Endothelial cell of umbilical vein (primary cell): ENCODE measurements at regions of chr13 and their contacts with region 1.

Region 1: DNA sequence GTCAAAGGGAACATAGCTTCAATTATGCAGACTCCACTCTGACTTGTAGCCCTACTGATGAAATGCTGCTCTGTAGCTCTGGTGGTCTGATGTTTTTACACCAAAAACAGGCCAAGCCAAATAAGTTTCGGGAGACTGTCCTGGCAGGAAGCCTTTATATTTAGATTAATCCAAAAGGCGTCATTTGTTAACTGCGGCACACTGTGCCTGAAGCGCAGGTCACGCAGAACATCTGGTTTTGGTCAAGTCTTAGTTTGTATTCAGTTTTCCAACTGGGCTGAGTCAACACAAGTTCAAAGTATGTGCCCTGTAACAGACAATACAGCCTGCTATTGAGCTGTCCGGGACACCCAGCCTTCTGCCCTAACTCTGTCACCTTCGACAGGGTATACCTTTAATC is 154.6 kb upstream of the IPO5 start:
- DNase-seq: no peak
- H3K4me3 ChIP-seq: no peak overlapping the region
- H3K27ac ChIP-seq: no peak overlapping the region
- H3K4me1 ChIP-seq: no peaks in the 10 kb centered on the region
- H3K27me3 ChIP-seq: peaks cover 0 to 3% of the 10 kb centered on the region in 2 experiments
- CTCF ChIP-seq: no peak
- POLR2A ChIP-seq: no peak

Region 2: DNA sequence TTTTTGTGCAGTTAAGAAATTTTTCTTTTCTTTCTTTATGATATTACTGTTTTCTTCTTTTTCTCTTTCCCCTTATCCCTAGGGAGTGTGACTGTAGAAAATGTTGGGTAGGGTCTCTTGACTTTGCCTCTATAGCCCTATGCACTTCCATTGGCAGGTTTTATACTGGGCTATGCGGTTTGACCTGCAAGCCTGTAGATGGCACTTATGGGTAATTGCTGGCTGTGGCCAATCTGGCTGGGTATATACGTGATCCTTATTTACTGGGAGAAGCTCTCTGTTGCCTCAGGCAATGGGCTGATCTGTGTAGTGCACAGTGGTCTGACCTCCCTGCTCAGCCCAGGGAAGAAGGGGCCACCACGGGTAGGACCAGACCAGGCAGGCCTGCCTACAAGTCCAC is 286.1 kb before region 1 on chr13:
- CTCF ChIA-PET with region 1: no interaction called
- POLR2A ChIA-PET with region 1: no interaction called
- dilution Hi-C with region 1: no loop called
- intact Hi-C with region 1: loop called (anchors 5 kb)
- DNase-seq: no peak
- H3K4me3 ChIP-seq: no peak overlapping the region
- H3K27ac ChIP-seq: no peak overlapping the region
- H3K4me1 ChIP-seq: no peaks in the 10 kb centered on the region
- H3K27me3 ChIP-seq: peaks cover 0 to 4% of the 10 kb centered on the region in 2 experiments
- CTCF ChIP-seq: no peak
- POLR2A ChIP-seq: no peak

Region 3: GRCh38 chr13:97588993-97589392 is 209.8 kb before region 1 on chr13:
- CTCF ChIA-PET with region 1: interaction called, 5 read pairs
- POLR2A ChIA-PET with region 1: no interaction called
- dilution Hi-C with region 1: no loop called
- intact Hi-C with region 1: loop called (anchors 1 kb)
- DNase-seq: no peak
- H3K4me3 ChIP-seq: no peak overlapping the region
- H3K27ac ChIP-seq: no peak overlapping the region
- H3K4me1 ChIP-seq: no peaks in the 10 kb centered on the region
- H3K27me3 ChIP-seq: peaks cover 4 to 6% of the 10 kb centered on the region in 2 experiments
- CTCF ChIP-seq: peak in 1 of 2 donors; percentile 8
- POLR2A ChIP-seq: no peak

Region 4: GRCh38 chr13:97659602-97660001 is 139.2 kb before region 1 on chr13:
- CTCF ChIA-PET with region 1: interaction called, 4 read pairs
- POLR2A ChIA-PET with region 1: no interaction called
- dilution Hi-C with region 1: no loop called
- intact Hi-C with region 1: loop called (anchors 1 kb)
- DNase-seq: peak; percentile 45
- H3K4me3 ChIP-seq: no peak overlapping the region
- H3K27ac ChIP-seq: no peak overlapping the region
- H3K4me1 ChIP-seq: peaks cover 54% of the 10 kb centered on the region
- H3K27me3 ChIP-seq: no peaks in the 10 kb centered on the region
- CTCF ChIP-seq: peak; percentile 30 to 41
- POLR2A ChIP-seq: no peak

Region 5: DNA sequence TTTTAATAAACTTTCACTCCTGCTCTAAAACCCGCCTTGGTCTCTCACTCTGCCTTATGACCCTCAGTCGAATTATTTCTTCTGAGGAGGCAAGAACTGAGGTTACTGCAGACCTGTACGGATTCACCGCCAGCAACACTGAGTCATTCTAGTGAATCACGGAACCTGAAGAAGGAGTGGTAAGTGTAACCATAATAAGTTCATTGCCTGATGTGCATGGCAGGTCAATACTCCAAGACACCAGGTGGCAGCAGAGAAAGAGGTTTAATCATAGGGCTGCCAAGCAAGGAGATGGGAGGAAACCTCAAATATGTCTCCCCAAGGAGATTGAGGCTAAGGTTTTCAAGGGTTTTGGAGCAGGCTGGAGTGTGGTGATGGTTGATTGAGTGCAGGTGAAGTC is 49.7 kb before region 1 on chr13:
- CTCF ChIA-PET with region 1: no interaction called
- POLR2A ChIA-PET with region 1: no interaction called
- dilution Hi-C with region 1: no loop called
- intact Hi-C with region 1: loop called (anchors 1 kb)
- DNase-seq: peak; percentile 12
- H3K4me3 ChIP-seq: no peak overlapping the region
- H3K27ac ChIP-seq: no peak overlapping the region
- H3K4me1 ChIP-seq: no peaks in the 10 kb centered on the region
- H3K27me3 ChIP-seq: no peaks in the 10 kb centered on the region
- CTCF ChIP-seq: no peak
- POLR2A ChIP-seq: no peak